ENCODE measurements at regions of chr14 and their contacts with region 1.

Region 1: DNA sequence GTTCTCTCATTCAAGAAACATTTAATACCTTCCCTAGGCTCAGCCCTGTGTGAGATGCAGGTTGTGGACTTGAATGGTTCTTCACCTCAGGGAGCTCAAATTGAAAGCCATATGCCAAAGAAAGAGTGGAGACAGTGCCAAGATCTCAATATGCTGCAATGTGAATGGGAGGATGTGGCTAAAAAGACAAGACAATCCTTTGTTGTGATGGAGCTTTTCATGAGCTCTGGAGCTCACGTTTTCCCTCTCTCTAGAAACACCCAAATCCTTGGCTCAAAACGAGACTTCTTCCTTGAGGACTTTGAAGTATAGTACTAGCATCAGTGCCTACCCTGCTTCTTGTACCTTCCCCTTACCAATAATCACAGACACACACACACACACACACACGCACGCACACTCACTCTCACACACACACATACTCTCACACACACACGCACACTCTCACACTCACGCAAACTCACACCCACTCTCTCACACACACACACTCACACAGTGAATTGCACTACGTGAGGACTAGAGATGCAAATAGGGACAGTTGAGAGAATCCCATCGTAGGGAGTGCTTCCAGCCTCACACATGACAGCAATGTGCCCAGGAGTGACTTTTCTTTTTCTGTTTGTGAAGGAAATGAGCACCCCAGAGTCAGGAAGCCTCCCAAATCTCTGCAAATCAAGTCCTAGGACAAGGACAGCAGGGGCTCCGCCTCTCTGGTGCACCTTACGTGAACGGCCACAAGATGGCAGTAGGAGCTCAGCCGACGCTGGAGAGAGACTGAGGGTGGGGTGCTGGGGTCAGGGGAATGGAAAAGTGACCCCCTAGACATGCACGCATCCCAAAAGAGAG is 231.4 kb downstream of the PCNX1 start:
- DNase-seq: peak; percentile 44 to 57
- H3K4me3 ChIP-seq: no peak overlapping the region
- H3K27ac ChIP-seq: no peak overlapping the region
- H3K4me1 ChIP-seq: peaks cover 33% of the 10 kb centered on the region
- H3K27me3 ChIP-seq: no peaks in the 10 kb centered on the region
- CTCF ChIP-seq: peak; percentile 99

Region 2: DNA sequence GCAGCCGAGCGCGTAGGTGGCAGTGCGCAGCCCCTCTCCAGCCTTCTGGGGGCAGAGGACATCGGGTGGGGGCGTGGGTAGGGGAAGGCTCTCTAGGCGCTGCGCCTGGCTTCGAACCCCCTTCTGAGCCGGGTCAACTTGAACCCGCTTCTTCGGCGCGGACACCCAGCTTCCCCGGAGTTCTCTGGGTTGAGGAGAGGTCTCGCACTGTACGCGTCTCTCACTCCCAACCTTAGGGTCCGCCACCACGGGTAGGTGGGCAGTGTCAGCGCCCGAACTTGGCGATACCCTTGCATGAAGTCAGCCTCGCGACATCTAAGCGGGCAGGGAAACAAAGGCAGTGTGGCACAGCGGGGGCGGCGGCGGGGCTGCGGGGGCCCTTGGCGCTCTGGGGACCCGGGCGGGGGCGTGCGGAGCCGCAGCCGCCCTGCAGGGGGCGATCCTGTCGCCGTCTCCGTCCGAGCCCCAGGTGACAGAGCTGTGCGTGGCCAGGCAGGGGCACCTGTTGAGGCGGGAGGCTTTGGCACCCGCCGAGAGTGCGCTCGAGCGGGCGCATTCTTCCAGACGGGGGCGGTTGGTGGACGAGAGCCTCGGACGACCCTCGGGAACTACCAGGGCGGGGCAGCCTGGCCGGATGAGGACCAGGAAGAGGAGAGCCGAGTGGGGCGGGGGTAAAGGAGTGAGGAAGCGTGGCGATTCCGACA is 1877.7 kb before region 1 on chr14:
- CTCF ChIA-PET with region 1: no interaction called
- POLR2A ChIA-PET with region 1: no interaction called
- intact Hi-C with region 1: loop called (anchors 5 kb)
- DNase-seq: peak in 1 of 2 experiments; percentile 48
- H3K4me3 ChIP-seq: no peak overlapping the region
- H3K27ac ChIP-seq: no peak overlapping the region
- H3K4me1 ChIP-seq: no peaks in the 10 kb centered on the region
- H3K27me3 ChIP-seq: peaks cover 20% of the 10 kb centered on the region; the same call in 1 of the 2 replicates
- CTCF ChIP-seq: no peak; the same call in 1 of the 2 replicates

Region 3: GRCh38 chr14:71290960-71291466 is 152.3 kb after region 1 on chr14:
- CTCF ChIA-PET with region 1: no interaction called
- POLR2A ChIA-PET with region 1: interaction called, 3 read pairs
- intact Hi-C with region 1: loop called (anchors 1 kb)
- DNase-seq: peak; percentile 63 to 97
- H3K4me3 ChIP-seq: 0 out of 2 replicates have a peak overlapping the region, but pooled peaks have one; percentile 9
- H3K27ac ChIP-seq: peak overlapping the region; percentile 95
- H3K4me1 ChIP-seq: peaks cover 69% of the 10 kb centered on the region
- H3K27me3 ChIP-seq: no peaks in the 10 kb centered on the region
- CTCF ChIP-seq: no peak

Region 4: DNA sequence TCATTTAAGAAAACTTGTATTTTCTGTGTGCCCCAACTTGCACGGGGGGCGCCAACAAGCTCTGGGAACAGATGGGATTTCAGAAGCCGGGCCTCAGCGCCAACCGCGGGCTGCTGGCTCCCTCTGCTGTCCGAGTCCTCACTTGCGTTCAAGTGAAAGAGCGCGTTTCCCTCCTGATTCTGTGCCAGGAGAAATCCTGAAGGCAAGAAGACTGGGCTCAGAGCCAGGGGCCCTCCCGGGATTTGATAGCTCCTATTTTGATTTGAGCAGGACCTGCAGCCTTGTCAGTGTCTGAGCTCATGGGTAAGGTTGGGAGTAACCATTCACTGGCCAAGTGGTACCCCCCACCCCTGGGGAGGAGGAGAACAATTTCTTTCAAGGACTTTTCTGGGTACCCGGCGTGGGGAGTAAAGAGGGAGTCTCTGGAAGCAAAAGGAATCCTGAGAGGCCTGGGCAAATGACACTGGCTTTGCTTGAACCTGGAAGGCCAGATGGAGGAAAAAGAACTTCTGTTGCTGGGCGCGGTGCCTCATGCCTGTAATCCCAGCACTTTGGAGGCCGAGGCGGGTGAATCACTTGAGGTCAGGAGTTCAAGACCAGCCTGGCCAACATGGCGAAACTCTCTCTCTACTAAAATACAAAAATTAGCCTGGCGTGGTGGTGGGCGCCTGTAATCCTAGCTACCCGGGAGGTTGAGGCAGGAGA is 614.6 kb after region 1 on chr14:
- CTCF ChIA-PET with region 1: interaction called, 6 read pairs
- POLR2A ChIA-PET with region 1: no interaction called
- intact Hi-C with region 1: loop called (anchors 1 kb)
- DNase-seq: peak; percentile 63 to 78
- H3K4me3 ChIP-seq: peak overlapping the region; percentile 29; the same call in 1 of the 2 replicates
- H3K27ac ChIP-seq: no peak overlapping the region
- H3K4me1 ChIP-seq: 0 out of 2 replicates have a peak, but pooled peaks cover 5% of the 10 kb centered on the region
- H3K27me3 ChIP-seq: no peaks in the 10 kb centered on the region
- CTCF ChIP-seq: peak; percentile 93